ENCODE measurements at regions of chr5 and their contacts with region 1.

Region 1: DNA sequence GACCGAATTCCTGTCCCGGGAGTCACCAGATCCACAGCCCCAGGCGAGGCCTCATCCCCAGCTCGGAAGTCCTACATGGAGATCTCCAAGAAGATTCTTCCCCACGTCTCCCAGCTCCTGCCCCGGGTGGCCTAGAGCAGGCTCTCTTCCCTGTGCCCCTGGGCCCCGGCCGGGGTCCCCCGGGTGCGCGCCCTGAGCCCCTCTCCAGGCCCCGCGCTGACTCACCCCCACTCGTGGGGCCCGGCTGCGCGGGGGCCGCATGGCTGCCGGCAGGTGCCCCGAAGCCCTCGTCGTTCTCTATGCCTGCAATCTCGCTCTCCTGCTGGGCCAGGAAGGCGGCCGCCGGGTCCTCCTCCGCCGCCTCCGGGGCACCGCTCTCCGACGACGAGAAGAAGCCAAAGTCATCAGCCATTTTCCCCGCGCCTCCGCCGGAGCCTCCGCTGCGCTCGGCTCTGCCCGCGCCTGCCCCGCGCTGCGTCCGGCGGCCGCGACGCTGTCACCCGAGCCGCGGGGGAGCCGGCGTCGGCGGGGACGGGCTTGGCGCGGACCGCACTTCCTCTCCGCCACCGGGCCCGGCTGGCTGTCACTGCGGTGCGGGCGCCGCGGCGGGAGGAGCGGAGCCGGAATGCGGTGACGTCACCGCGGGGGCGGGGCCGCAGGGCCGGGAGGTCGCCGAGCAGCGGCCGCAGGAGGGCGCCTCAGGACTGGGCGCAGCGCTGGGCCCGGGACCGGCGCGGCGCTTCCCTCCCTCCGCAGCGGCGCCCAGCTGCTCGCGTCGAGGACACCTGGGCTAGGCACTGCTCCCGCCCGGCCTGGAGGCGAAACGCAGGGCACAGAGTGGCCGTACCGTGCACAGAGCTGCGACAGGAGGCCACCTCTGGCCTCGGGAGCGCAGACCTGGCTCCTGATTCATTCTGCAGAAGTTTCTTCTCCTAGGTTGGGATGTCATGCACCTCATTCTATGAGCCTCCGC is at the start of gene CLTB:
- DNase-seq: peak; percentile 90
- H3K4me3 Mint-ChIP-seq: peak within 1 kb of the TSS; percentile 74
- H3K27ac Mint-ChIP-seq: peak within 1 kb of the TSS; percentile 74
- H3K4me1 Mint-ChIP-seq: peaks cover 38% of the 10 kb centered on the region
- H3K27me3 Mint-ChIP-seq: no peaks in the 10 kb centered on the region
- total RNA-seq, gene CLTB: 51.1 to 53.9 TPM

Region 2: GRCh38 chr5:175444060-175444904 is 972.0 kb before region 1 on chr5 and contains the start of gene DRD1:
- CTCF ChIA-PET with region 1: no interaction called
- intact Hi-C with region 1: no loop called
- DNase-seq: peak; percentile 52
- H3K4me3 Mint-ChIP-seq: peak within 1 kb of the TSS; percentile 57
- H3K27ac Mint-ChIP-seq: no peak within 1 kb of the TSS
- H3K4me1 Mint-ChIP-seq: peaks cover 8% of the 10 kb centered on the region
- H3K27me3 Mint-ChIP-seq: peaks cover 40% of the 10 kb centered on the region
- total RNA-seq, gene DRD1: not detected

Region 3: DNA sequence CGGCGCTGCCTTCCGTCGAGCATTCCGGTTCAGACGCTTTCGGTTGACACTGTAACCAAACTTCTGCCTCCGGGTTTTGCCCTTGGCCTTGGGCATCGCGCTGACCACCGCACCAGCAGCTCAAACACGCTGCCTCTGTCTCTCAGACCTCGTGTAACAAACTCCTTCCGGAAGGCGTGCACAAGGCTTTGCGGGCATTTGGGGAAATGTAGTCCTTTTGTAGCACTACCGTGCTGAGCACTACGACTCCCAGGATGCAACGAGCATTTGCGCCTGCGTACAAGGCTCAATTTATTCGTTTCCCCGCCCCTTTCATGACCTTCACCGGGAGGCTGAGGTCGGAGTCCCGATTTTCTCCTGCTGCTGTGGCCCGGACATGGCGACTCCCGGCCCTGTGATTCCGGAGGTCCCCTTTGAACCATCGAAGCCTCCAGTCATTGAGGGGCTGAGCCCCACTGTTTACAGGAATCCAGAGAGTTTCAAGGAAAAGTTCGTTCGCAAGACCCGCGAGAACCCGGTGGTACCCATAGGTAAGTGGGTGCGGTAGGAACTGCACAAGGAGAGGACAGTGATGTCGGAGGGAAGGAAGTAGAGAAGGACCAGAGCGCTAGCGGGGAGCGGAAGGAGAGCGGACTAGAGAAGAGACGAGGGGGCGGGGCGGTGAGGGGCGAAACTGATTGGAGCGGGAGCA is 27.6 kb before region 1 on chr5 and contains the starts of genes HIGD2A and NOP16:
- CTCF ChIA-PET with region 1: no interaction called
- intact Hi-C with region 1: loop called (anchors 1 kb)
- DNase-seq: peak; percentile 100
- H3K4me3 Mint-ChIP-seq: peak within 1 kb of the TSS; percentile 100
- H3K27ac Mint-ChIP-seq: peak within 1 kb of the TSS; percentile 100
- H3K4me1 Mint-ChIP-seq: peaks cover 33% of the 10 kb centered on the region
- H3K27me3 Mint-ChIP-seq: no peaks in the 10 kb centered on the region
- total RNA-seq, gene HIGD2A: 154 to 155 TPM
- total RNA-seq, gene NOP16: 42.1 to 43.1 TPM

Region 4: GRCh38 chr5:176447982-176448608 is 31.9 kb after region 1 on chr5 and contains the start of gene FAF2:
- CTCF ChIA-PET with region 1: interaction called, 17 read pairs
- intact Hi-C with region 1: loop called (anchors 1 kb)
- DNase-seq: peak; percentile 98
- H3K4me3 Mint-ChIP-seq: peak within 1 kb of the TSS; percentile 99
- H3K27ac Mint-ChIP-seq: peak within 1 kb of the TSS; percentile 97
- H3K4me1 Mint-ChIP-seq: peaks cover 37% of the 10 kb centered on the region
- H3K27me3 Mint-ChIP-seq: no peaks in the 10 kb centered on the region
- total RNA-seq, gene FAF2: 30.0 to 32.8 TPM

Region 5: GRCh38 chr5:176559683-176560082 is 143.4 kb after region 1 on chr5:
- CTCF ChIA-PET with region 1: no interaction called
- intact Hi-C with region 1: loop called (anchors 1 kb)
- DNase-seq: peak; percentile 62
- H3K4me3 Mint-ChIP-seq: no peak overlapping the region
- H3K27ac Mint-ChIP-seq: no peak overlapping the region
- H3K4me1 Mint-ChIP-seq: peaks cover 42% of the 10 kb centered on the region
- H3K27me3 Mint-ChIP-seq: no peaks in the 10 kb centered on the region

Region 6: DNA sequence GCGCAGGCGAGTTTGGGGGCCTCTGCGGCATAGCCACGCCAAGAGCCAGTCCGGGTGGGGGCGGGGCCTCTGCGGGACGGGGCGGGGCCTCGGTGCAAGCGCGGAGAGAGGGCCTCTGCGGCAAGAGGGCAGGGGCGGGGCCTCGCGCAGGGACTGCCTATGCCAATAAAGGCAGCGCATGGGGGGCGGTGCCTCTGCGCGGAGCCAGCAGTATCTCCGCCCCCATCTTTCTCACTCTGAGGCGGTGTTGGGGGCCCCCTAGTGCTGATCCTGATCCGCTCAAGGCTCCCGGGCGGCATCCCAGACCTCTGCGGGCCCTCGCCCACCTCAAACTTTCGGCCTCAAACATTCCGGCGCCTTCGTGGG is 202.9 kb after region 1 on chr5:
- CTCF ChIA-PET with region 1: no interaction called
- intact Hi-C with region 1: loop called (anchors 2 kb)
- DNase-seq: peak; percentile 89
- H3K4me3 Mint-ChIP-seq: peak overlapping the region; percentile 48
- H3K27ac Mint-ChIP-seq: no peak overlapping the region
- H3K4me1 Mint-ChIP-seq: peaks cover 18% of the 10 kb centered on the region
- H3K27me3 Mint-ChIP-seq: peaks cover 48% of the 10 kb centered on the region

Region 7: DNA sequence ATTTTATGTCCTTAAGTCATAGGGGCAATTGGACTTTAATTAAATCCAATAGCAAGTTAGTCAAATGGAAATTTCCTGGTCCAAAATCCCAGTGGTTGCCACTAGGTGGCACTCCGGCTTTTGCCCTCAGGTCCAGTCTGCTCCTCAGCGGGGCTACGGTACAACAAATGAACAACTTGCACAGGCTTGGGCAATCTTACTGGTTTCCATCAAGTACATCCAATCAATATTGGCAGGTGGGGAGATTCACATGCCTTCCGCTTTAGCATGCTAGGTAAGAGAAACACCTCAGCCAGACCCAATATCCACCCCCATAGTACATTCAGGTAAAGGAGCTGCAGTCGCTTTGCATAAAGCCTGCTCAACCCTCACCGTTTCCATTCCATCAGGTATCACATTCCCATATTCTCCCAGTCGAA is 901.7 kb after region 1 on chr5:
- CTCF ChIA-PET with region 1: no interaction called
- intact Hi-C with region 1: no loop called
- DNase-seq: peak; percentile 90
- H3K4me3 Mint-ChIP-seq: no peak overlapping the region
- H3K27ac Mint-ChIP-seq: no peak overlapping the region
- H3K4me1 Mint-ChIP-seq: peaks cover 19% of the 10 kb centered on the region
- H3K27me3 Mint-ChIP-seq: no peaks in the 10 kb centered on the region

Measured in activated naive CD4-positive, alpha-beta T cell treated with anti-CD3 and anti-CD28 coated beads for 36 hours (primary cell).